Mammary epithelial cell (primary cell): ENCODE measurements at regions of chr10 and their contacts with region 1.

Region 1: GRCh38 chr10:31947144-31947926 is 18.7 kb upstream of the ARHGAP12 start:
- DNase-seq: peak; percentile 84
- H3K4me3 ChIP-seq: no peak overlapping the region
- H3K27ac ChIP-seq: peak overlapping the region; percentile 78
- H3K4me1 ChIP-seq: peaks cover 31% of the 10 kb centered on the region
- H3K27me3 ChIP-seq: no peaks in the 10 kb centered on the region
- CTCF ChIP-seq: peak; percentile 42 to 67

Region 2: DNA sequence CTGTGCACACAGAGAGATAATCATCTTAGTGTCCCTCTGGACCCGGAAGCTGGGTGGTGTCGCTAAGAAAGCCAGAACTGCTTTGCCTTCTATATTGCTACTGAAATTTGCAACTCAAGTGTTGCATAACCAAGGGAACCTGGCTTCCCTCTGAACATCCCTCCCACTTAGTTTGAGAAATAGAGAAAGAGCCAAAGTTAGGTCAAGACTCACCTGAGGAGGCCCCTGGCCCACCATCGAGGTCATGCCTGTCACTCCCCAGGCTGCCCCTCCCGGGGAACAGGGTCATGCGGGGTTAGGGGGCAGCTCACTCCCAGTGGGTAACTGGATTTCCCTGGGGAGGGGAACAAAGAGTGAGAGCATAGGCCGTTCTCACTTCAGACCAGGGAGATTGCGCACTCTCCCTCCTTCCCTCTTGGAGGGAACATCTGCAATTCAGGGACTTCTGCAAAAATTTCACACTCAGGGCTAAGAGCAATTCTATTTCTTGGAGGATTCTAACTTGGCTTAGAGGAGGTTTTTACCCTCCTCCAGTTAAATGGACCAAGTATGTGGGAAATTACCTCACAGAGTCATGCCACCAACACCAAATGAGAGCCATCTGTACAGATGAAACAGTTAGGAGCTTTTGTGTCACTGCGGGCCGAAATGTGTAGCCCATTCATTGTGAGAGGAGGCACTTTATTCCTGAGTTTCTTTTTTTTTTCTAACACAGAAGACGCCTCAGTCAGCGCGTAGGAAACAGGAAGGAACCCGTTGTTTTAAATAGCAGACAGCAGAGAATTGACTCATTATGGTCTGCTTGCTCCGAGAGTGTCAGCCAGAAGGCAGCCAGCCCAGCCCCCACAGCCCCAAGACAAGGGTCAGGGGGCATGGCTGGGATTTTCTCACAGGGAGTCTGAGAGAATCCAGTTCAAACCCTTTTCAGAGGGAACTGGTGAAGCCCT is 240.0 kb before region 1 on chr10:
- CTCF ChIA-PET with region 1: no interaction called
- dilution Hi-C with region 1: no loop called
- in situ Hi-C with region 1: no loop called
- intact Hi-C with region 1: loop called (anchors 2 kb)
- DNase-seq: peak; percentile 32
- H3K4me3 ChIP-seq: no peak overlapping the region
- H3K27ac ChIP-seq: no peak overlapping the region
- H3K4me1 ChIP-seq: no peaks in the 10 kb centered on the region
- H3K27me3 ChIP-seq: no peaks in the 10 kb centered on the region
- CTCF ChIP-seq: no peak

Region 3: GRCh38 chr10:31864834-31865518 is 82.4 kb before region 1 on chr10:
- CTCF ChIA-PET with region 1: interaction called, 13 read pairs
- dilution Hi-C with region 1: loop called (anchors 5 kb)
- in situ Hi-C with region 1: loop called in 1 of 2 experiments (anchors 10 kb)
- intact Hi-C with region 1: loop called (anchors 1 kb)
- DNase-seq: no peak
- H3K4me3 ChIP-seq: no peak overlapping the region
- H3K27ac ChIP-seq: no peak overlapping the region
- H3K4me1 ChIP-seq: peaks cover 6% of the 10 kb centered on the region
- H3K27me3 ChIP-seq: no peaks in the 10 kb centered on the region
- CTCF ChIP-seq: no peak

Region 4: GRCh38 chr10:31912898-31913852 is 34.2 kb before region 1 on chr10:
- CTCF ChIA-PET with region 1: no interaction called
- dilution Hi-C with region 1: loop called (anchors 5 kb)
- in situ Hi-C with region 1: no loop called
- intact Hi-C with region 1: no loop called
- DNase-seq: no peak
- H3K4me3 ChIP-seq: no peak overlapping the region
- H3K27ac ChIP-seq: no peak overlapping the region
- H3K4me1 ChIP-seq: peaks cover 18% of the 10 kb centered on the region
- H3K27me3 ChIP-seq: no peaks in the 10 kb centered on the region
- CTCF ChIP-seq: no peak

Region 5: DNA sequence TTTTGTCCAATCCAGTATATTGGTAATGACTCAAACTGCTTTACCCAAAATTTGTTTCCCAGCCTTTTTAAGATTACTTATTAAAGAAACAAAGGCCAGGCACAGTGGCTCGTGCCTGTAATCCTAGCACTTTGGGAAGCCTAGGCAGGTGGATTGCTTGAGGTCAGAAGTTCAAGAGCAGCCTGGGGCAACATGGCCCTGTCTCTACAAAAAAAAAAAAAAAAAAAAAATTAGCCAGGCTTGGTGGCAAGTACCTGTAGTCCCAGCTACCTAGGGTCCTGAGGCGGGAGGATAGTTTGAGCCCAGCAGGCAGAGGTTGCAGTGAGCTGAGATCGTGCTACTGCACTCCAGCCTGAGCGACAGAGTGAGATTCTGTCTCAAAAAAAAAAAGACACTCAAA is 11.7 kb before region 1 on chr10:
- CTCF ChIA-PET with region 1: no interaction called
- dilution Hi-C with region 1: no loop called
- in situ Hi-C with region 1: no loop called
- intact Hi-C with region 1: no loop called
- DNase-seq: no peak
- H3K4me3 ChIP-seq: no peak overlapping the region
- H3K27ac ChIP-seq: no peak overlapping the region
- H3K4me1 ChIP-seq: peaks cover 29% of the 10 kb centered on the region
- H3K27me3 ChIP-seq: no peaks in the 10 kb centered on the region
- CTCF ChIP-seq: no peak

Region 6: DNA sequence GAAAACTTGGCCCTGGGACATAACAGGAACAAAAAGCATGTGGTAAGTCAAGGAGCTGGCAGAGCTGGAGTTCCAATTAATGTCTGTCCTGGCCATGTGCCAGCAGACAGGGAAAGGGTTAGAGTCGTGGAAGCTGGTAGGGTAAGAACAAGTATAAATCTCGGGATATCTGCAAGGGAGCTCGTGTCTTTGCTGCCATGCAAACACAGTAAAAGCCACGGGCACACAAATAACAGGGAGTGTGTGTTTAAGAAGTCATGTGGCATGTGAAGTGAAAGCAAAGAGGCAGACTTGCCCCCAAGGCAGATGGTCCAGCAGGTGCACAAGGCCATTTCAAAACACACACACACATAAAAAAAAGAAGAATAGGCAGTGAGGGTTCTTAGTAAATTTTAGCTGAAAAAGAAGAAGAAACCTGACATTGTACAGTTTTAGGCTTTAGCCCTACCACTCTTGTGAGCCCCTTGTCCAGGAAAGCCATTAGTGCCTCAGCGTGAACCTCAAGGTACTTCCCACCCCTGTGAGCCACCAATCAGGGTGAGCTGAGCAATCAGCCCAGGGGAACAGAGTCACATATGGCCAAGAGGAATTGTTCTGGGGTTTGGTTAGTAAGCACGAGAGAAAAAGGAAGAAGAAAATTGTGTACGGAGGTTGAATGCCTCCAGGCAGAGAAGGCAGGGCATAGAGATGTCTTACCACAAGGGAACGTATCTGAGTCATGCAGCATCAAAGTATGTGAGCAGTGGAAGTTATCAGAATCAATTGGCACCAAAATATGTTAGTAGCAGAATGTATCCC is 14.1 kb after region 1 on chr10:
- CTCF ChIA-PET with region 1: no interaction called
- dilution Hi-C with region 1: no loop called
- in situ Hi-C with region 1: no loop called
- intact Hi-C with region 1: loop called (anchors 2 kb)
- DNase-seq: peak; percentile 96
- H3K4me3 ChIP-seq: peak overlapping the region in 2 of 3 experiments; percentile 2 to 14
- H3K27ac ChIP-seq: peak overlapping the region; percentile 78
- H3K4me1 ChIP-seq: peaks cover 47% of the 10 kb centered on the region
- H3K27me3 ChIP-seq: no peaks in the 10 kb centered on the region
- CTCF ChIP-seq: peak in 1 of 2 donors; percentile 8

Region 7: DNA sequence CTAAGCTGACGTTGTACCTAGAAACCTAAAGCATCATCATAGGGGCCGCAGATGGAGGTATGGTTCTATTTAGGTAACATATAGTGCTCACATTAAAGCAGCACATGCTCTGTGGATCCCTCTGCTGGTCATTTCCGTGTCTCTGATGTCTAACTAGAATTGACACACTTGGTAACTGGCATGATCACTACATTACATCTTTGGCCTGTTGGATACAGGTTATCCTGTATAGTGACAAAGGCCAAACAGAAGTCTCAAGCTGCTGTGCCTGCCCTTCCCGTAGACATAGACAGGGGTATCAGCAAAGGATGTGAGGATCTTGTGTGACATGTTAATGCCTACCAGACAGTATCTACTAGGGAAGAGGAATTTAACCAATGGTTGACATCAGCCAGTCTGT is 57.7 kb after region 1 on chr10:
- CTCF ChIA-PET with region 1: no interaction called
- dilution Hi-C with region 1: no loop called
- in situ Hi-C with region 1: no loop called
- intact Hi-C with region 1: no loop called
- DNase-seq: peak; percentile 25
- H3K4me3 ChIP-seq: no peak overlapping the region
- H3K27ac ChIP-seq: no peak overlapping the region
- H3K4me1 ChIP-seq: no peaks in the 10 kb centered on the region
- H3K27me3 ChIP-seq: no peaks in the 10 kb centered on the region
- CTCF ChIP-seq: peak; percentile 58 to 65